ENCODE measurements at regions of chr3 and their contacts with region 1.

Region 1: GRCh38 chr3:150763122-150763841 is at the start of gene SIAH2:
- DNase-seq: peak; percentile 83 to 99 (median 89)

Region 2: GRCh38 chr3:150721285-150722130 is 41.8 kb before region 1 on chr3:
- intact Hi-C with region 1: loop called (anchors 5 kb)
- DNase-seq: peak in 1 of 10 donors; percentile 59

Region 3: DNA sequence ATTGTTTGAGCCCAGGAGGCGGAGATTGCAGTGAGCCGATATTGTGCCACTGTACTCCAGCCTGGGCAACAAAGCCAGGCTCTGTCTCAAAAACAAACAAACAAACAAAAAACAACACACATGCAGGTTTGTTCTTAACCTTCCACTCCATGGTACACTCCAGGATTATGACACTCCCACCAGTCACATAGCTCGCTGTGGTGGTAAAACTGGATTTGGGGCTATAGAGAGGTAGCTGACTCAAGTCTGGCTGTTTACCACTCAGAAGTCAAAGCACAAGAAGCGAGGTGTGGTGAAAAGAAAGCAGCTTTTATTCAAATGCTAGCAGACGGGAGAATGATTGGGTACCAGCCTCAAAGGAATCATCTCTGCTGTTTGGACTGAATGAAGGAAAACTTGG is 48.7 kb after region 1 on chr3:
- intact Hi-C with region 1: no loop called
- DNase-seq: no peak